ENCODE measurements at regions of chr10 and their contacts with region 1.

Region 1: DNA sequence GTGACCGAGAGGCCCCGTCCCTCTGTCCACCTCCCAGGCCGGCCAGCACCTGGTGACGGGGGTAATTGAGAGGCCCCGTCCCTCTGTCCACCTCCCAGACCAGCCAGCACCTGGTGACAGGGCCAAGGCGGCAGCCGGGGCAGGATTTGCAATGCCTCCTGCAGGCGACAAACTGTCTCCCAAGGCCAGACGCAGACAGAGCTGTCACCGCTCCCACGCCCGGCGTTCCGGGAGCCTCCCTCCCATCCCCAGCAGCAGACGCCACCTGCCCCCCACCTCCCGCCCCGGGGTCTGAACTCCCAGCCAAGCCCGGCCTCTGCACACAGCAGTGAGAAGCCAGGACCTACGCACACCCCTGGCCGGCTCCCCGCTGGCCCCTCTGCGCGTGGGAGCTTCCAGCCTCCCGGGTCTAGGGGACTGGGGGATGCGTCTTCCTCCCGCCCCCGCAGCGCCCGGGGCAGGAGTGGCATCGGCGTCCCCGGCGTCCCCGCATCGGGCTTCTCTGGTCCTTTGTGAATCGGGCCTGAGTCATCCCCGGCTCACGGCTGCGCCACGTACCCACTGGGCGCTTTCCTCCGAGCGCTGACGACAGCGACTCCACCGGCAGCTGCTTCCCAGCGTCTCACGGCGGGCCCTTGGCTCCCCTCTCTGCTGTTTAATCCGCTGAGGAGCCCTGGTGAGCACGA is 95.1 kb upstream of the DIP2C start:
- DNase-seq: peak; percentile 54 to 85
- H3K4me3 ChIP-seq: peak overlapping the region; percentile 45 to 50
- H3K27ac ChIP-seq: no peak overlapping the region
- H3K4me1 ChIP-seq: peaks cover 0 to 22% (median 17%) of the 10 kb centered on the region in 4 donors
- H3K27me3 ChIP-seq: peaks cover 0 to 2% of the 10 kb centered on the region in 2 donors
- CTCF ChIP-seq: peak; percentile 25 to 29

Region 2: DNA sequence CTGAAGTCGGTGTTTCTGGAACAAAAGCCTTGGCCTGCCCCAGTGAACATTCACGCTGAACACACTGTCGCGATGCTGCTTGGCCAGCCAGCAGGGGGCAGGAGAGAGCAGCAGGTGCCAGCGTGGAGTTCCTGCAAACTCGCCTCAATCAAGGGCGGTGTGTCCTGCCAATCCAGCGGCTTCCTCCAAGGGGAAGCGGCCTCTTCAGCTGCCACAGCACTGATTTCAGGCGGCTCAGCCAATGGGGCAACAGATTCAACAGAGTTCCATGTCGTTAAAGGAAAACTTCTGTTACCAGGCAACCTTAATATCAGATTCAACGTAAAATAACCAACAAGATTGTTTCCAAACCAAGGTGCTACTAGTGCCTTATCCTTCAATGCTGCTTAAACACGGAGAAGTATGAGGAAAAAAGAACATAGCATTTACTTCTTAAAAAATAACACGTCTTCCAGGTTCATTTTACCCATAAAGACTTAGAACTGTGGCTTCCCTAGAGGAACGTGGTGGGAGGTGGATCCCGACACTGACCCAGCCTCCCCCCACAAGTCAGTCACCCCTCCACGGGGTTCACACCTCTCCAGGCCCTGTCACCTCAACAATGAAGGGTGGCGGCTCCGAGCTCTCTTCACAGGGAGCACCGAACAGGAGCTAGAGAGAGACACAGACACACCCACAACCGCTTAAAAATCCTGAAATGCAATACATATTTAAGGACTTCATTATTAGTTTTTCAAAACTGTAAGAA is 273.3 kb before region 1 on chr10:
- intact Hi-C with region 1: loop called (anchors 5 kb)
- DNase-seq: peak; percentile 89 to 95
- H3K4me3 ChIP-seq: no peak overlapping the region
- H3K27ac ChIP-seq: peak overlapping the region; percentile 31 to 32
- H3K4me1 ChIP-seq: peaks cover 0 to 34% (median 17%) of the 10 kb centered on the region in 4 donors
- H3K27me3 ChIP-seq: no peaks in the 10 kb centered on the region
- CTCF ChIP-seq: peak; percentile 93 to 95

Region 3: GRCh38 chr10:585502-585901 is 199.0 kb before region 1 on chr10:
- intact Hi-C with region 1: loop called (anchors 2 kb)
- DNase-seq: no peak
- H3K4me3 ChIP-seq: no peak overlapping the region
- H3K27ac ChIP-seq: no peak overlapping the region
- H3K4me1 ChIP-seq: peaks cover 0 to 54% (median 14%) of the 10 kb centered on the region in 4 donors
- H3K27me3 ChIP-seq: no peaks in the 10 kb centered on the region
- CTCF ChIP-seq: no peak

Region 4: GRCh38 chr10:819326-819725 is 34.8 kb after region 1 on chr10:
- intact Hi-C with region 1: no loop called
- DNase-seq: no peak
- H3K4me3 ChIP-seq: no peak overlapping the region
- H3K27ac ChIP-seq: no peak overlapping the region
- H3K4me1 ChIP-seq: no peaks in the 10 kb centered on the region
- H3K27me3 ChIP-seq: no peaks in the 10 kb centered on the region
- CTCF ChIP-seq: no peak

Region 5: GRCh38 chr10:895319-895718 is 110.8 kb after region 1 on chr10:
- intact Hi-C with region 1: no loop called
- DNase-seq: no peak
- H3K4me3 ChIP-seq: no peak overlapping the region
- H3K27ac ChIP-seq: no peak overlapping the region
- H3K4me1 ChIP-seq: peaks cover 0 to 7% (median 3%) of the 10 kb centered on the region in 4 donors
- H3K27me3 ChIP-seq: no peaks in the 10 kb centered on the region
- CTCF ChIP-seq: no peak